ENCODE measurements at regions of chr2 and their contacts with region 1.

Region 1: DNA sequence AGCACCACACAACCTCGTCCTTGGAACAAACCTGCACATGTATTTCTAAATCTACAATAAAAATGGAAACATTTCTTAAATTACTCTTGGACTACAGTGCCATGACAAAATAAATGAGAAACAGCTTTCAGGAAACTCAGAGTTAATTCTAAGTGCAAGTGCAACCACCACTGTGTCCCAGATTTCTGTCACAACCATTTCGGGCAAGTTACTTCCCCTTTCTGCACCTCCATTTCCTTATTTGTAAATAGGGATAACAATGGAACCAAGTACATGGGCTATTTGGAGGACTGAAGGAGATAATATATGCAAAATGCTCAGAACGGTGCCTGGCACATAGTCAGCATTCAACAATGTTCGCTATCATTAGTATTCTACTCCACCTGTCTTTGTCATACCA is 93.2 kb downstream of the CACNB4 start:
- DNase-seq: no peak
- ATAC-seq: no peak

Region 2: DNA sequence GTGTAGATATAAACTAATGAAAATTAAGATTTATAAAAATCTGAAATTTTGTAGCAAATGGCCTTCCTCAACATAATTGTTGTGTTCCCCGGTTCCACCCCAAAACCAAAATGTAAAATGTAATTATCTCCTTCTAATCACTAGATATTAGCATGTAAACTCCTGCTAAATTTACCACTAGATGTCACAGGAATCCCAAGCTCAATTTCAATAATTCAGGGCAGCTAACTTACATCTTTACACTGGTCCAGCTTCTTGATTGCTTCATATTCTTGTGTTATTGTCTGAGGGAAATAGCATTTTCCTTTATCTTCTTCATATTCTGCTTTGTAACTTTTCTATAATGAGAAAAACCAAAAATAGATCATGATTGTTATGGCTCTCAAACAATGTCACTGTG is 314.0 kb before region 1 on chr2:
- intact Hi-C with region 1: loop called in 1 of 2 experiments (anchors 5 kb)
- DNase-seq: no peak
- ATAC-seq: no peak

Region 3: GRCh38 chr2:151819920-151820319 is 185.7 kb before region 1 on chr2:
- intact Hi-C with region 1: loop called in 1 of 2 experiments (anchors 10 kb)
- DNase-seq: no peak
- ATAC-seq: no peak

Measured in left cardiac atrium (tissue), 4 donors.